Mammary epithelial cell (primary cell): ENCODE measurements at regions of chr6 and their contacts with region 1.

Region 1: DNA sequence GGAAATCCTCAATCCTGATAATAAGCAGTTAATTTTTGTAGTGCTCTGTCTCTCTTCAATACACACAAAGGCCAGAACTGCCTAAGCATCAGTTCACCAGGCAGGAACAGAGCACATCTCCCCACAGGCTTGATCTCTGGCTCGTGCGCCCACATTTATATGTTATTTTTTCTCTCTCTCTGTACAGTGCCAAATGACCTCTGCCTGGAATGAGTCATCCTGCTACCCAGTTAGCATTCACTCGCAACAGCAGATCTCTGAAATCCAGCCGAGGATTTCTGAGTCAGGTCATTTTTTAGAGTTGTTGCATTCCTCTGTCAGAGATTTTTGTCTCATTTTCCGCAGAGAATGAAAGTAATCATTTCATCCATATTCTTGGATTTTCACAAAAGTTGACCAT is 107.1 kb downstream of the COL12A1 start:
- DNase-seq: peak; percentile 80
- H3K4me3 ChIP-seq: no peak overlapping the region
- H3K27ac ChIP-seq: no peak overlapping the region
- H3K4me1 ChIP-seq: peaks cover 11% of the 10 kb centered on the region
- H3K27me3 ChIP-seq: no peaks in the 10 kb centered on the region
- CTCF ChIP-seq: no peak

Region 2: DNA sequence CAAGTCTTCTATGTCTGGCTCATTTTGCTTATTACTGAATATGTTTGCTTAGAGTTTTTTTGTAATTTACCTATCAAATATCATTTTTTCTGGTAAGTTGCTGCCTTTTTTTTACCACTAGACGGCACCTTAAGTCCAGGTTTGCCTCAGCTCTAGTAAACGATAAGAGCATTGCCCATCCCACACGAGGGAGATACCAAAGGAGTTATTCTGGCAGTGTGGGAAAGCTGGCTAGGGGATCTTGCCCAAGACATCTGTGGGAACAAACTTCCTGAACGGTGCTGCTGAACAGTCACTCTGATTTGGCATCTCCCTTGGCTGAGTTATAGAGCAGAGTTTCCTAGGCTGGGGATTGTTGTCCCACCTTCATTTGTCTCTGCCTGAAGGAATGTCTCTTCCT is 199.3 kb before region 1 on chr6:
- CTCF ChIA-PET with region 1: no interaction called
- dilution Hi-C with region 1: no loop called
- in situ Hi-C with region 1: loop called in 1 of 2 experiments (anchors 25 kb)
- intact Hi-C with region 1: loop called (anchors 2 kb)
- DNase-seq: peak; percentile 79
- H3K4me3 ChIP-seq: no peak overlapping the region
- H3K27ac ChIP-seq: peak overlapping the region; percentile 31
- H3K4me1 ChIP-seq: peaks cover 10% of the 10 kb centered on the region
- H3K27me3 ChIP-seq: no peaks in the 10 kb centered on the region
- CTCF ChIP-seq: peak; percentile 83 to 95

Region 3: GRCh38 chr6:74939151-74939708 is 159.5 kb before region 1 on chr6:
- CTCF ChIA-PET with region 1: no interaction called
- dilution Hi-C with region 1: no loop called
- in situ Hi-C with region 1: no loop called
- intact Hi-C with region 1: loop called (anchors 5 kb)
- DNase-seq: peak; percentile 39
- H3K4me3 ChIP-seq: no peak overlapping the region
- H3K27ac ChIP-seq: no peak overlapping the region
- H3K4me1 ChIP-seq: peaks cover 18% of the 10 kb centered on the region
- H3K27me3 ChIP-seq: no peaks in the 10 kb centered on the region
- CTCF ChIP-seq: peak in 1 of 2 donors; percentile 41

Region 4: DNA sequence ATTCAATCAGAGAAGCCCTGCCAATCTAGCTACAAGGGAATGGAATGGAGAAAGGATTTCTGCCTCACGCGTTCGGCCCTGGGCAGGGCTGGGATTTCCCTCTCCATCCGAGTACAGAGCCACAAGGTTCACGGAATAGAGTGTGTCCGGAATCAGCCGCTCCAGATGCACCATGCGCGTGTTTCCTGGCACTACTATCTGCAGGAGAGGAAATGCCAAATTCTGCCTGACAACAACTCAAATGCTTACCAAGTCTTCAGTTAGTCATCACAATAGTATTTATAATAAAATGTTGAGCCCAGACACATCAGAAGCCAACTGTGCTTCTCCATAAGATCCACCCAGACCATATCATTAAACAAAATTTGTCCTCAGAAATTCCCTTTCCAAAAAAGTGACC is 32.1 kb after region 1 on chr6:
- CTCF ChIA-PET with region 1: no interaction called
- dilution Hi-C with region 1: loop called (anchors 5 kb)
- in situ Hi-C with region 1: no loop called
- intact Hi-C with region 1: no loop called
- DNase-seq: no peak
- H3K4me3 ChIP-seq: no peak overlapping the region
- H3K27ac ChIP-seq: no peak overlapping the region
- H3K4me1 ChIP-seq: no peaks in the 10 kb centered on the region
- H3K27me3 ChIP-seq: no peaks in the 10 kb centered on the region
- CTCF ChIP-seq: no peak